CD4-positive, alpha-beta memory T cell (primary cell): ENCODE measurements at regions of chr1 and their contacts with region 1.

Region 1: GRCh38 chr1:51878616-51879336 is at the start of gene NRDC:
- DNase-seq: peak; percentile 99 to 100 (median 100)
- H3K4me3 ChIP-seq: peak within 1 kb of the TSS; percentile 92 to 96
- H3K4me3 Mint-ChIP-seq: no peak within 1 kb of the TSS
- H3K27ac ChIP-seq: peak within 1 kb of the TSS; percentile 94
- H3K27ac Mint-ChIP-seq: no peak within 1 kb of the TSS
- H3K4me1 ChIP-seq: peaks cover 42% of the 10 kb centered on the region
- H3K4me1 Mint-ChIP-seq: peaks cover 0 to 25% (median 10%) of the 10 kb centered on the region in 4 donors
- H3K27me3 ChIP-seq: no peaks in the 10 kb centered on the region
- H3K27me3 Mint-ChIP-seq: peaks cover 11 to 12% of the 10 kb centered on the region in 2 donors
- total RNA-seq, gene NRDC: 133 to 137 TPM

Region 2: GRCh38 chr1:51519048-51519864 is 359.5 kb before region 1 on chr1 and contains the start of gene EPS15:
- CTCF ChIA-PET with region 1: no interaction called
- POLR2A ChIA-PET with region 1: no interaction called
- intact Hi-C with region 1: loop called (anchors 5 kb)
- DNase-seq: peak; percentile 79 to 89 (median 83)
- H3K4me3 ChIP-seq: peak within 1 kb of the TSS; percentile 92 to 93
- H3K4me3 Mint-ChIP-seq: peak within 1 kb of the TSS; percentile 90 to 98 (median 97)
- H3K27ac ChIP-seq: peak within 1 kb of the TSS; percentile 69
- H3K27ac Mint-ChIP-seq: peak within 1 kb of the TSS; percentile 90 to 97 (median 95)
- H3K4me1 ChIP-seq: peaks cover 54% of the 10 kb centered on the region
- H3K4me1 Mint-ChIP-seq: peaks cover 44 to 62% (median 51%) of the 10 kb centered on the region in 4 donors
- H3K27me3 ChIP-seq: no peaks in the 10 kb centered on the region
- H3K27me3 Mint-ChIP-seq: no peaks in the 10 kb centered on the region
- total RNA-seq, gene EPS15: 91.5 to 92.3 TPM

Region 3: GRCh38 chr1:51729156-51729823 is 149.5 kb before region 1 on chr1:
- CTCF ChIA-PET with region 1: no interaction called
- POLR2A ChIA-PET with region 1: interaction called, 3 read pairs
- intact Hi-C with region 1: loop called (anchors 2 kb)
- DNase-seq: peak; percentile 92 to 94 (median 93)
- H3K4me3 ChIP-seq: peak overlapping the region; percentile 89 to 96
- H3K4me3 Mint-ChIP-seq: peak overlapping the region; percentile 94 to 97 (median 94)
- H3K27ac ChIP-seq: peak overlapping the region; percentile 68
- H3K27ac Mint-ChIP-seq: peak overlapping the region; percentile 67 to 96 (median 94)
- H3K4me1 ChIP-seq: peaks cover 37% of the 10 kb centered on the region
- H3K4me1 Mint-ChIP-seq: peaks cover 30 to 54% (median 39%) of the 10 kb centered on the region in 4 donors
- H3K27me3 ChIP-seq: no peaks in the 10 kb centered on the region
- H3K27me3 Mint-ChIP-seq: no peaks in the 10 kb centered on the region

Region 4: DNA sequence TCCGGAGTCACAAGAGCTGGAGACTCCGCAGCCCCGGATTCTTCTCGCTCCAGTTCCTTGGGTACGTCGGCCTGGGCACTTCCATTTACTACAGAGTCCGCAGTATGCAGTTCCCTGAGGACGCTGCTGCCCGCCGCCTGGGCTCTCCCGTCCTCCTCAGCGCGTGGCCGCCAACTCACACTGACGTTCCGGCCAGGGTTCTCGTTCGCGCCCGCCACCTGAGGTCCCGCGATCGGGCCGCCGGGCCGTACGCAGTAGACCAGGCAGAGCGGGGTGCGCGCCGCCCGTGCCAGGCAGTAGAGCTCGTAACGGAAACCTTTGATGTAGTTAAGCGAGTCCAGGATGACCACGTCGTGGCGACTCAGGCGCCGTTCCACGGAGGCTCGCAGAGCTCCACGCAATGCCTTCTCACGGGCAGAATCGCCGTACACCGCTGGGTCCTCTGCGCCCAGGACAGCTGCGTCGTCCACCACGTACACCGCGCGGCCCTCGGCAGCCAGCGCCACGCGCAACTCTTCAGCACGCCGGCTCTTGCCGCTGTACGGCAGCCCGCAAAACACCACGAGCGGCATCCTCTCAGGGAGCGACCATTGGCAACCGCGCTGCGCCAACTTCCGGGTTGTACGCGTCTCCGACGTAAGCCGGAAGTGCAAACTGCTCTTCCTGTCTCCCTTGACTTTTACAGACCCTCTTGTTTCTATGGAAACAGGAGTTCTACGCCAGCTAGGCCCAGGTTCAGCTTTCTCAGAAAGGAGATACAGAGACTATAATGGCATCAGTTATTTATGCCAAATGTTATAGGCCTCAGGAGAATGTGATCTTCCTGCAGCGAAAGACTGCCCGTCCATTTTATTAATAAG is 154.6 kb after region 1 on chr1 and contains the start of gene KTI12:
- CTCF ChIA-PET with region 1: no interaction called
- POLR2A ChIA-PET with region 1: interaction called, 13 read pairs
- intact Hi-C with region 1: loop called (anchors 1 kb)
- DNase-seq: peak; percentile 88 to 92 (median 90)
- H3K4me3 ChIP-seq: peak within 1 kb of the TSS; percentile 80 to 88
- H3K4me3 Mint-ChIP-seq: peak within 1 kb of the TSS; percentile 86 to 96 (median 93)
- H3K27ac ChIP-seq: peak within 1 kb of the TSS; percentile 81
- H3K27ac Mint-ChIP-seq: peak within 1 kb of the TSS; percentile 95 to 99 (median 96)
- H3K4me1 ChIP-seq: peaks cover 33% of the 10 kb centered on the region
- H3K4me1 Mint-ChIP-seq: peaks cover 31 to 45% (median 34%) of the 10 kb centered on the region in 4 donors
- H3K27me3 ChIP-seq: no peaks in the 10 kb centered on the region
- H3K27me3 Mint-ChIP-seq: no peaks in the 10 kb centered on the region
- total RNA-seq, gene KTI12: 14.0 to 15.6 TPM

Region 5: GRCh38 chr1:52404116-52404986 is 525.6 kb after region 1 on chr1 and contains the starts of genes ORC1 and PRPF38A:
- CTCF ChIA-PET with region 1: no interaction called
- POLR2A ChIA-PET with region 1: interaction called, 3 read pairs
- intact Hi-C with region 1: loop called (anchors 5 kb)
- DNase-seq: peak; percentile 94 to 98 (median 96)
- H3K4me3 ChIP-seq: peak within 1 kb of the TSS; percentile 85 to 88
- H3K4me3 Mint-ChIP-seq: peak within 1 kb of the TSS; percentile 98 to 100 (median 100)
- H3K27ac ChIP-seq: peak within 1 kb of the TSS; percentile 91
- H3K27ac Mint-ChIP-seq: peak within 1 kb of the TSS; percentile 94 to 99 (median 99)
- H3K4me1 ChIP-seq: peaks cover 25% of the 10 kb centered on the region
- H3K4me1 Mint-ChIP-seq: peaks cover 22 to 44% (median 36%) of the 10 kb centered on the region in 4 donors
- H3K27me3 ChIP-seq: no peaks in the 10 kb centered on the region
- H3K27me3 Mint-ChIP-seq: no peaks in the 10 kb centered on the region
- total RNA-seq, gene ORC1: 1.1 to 1.5 TPM
- total RNA-seq, gene PRPF38A: 69.7 to 70.4 TPM

Region 6: DNA sequence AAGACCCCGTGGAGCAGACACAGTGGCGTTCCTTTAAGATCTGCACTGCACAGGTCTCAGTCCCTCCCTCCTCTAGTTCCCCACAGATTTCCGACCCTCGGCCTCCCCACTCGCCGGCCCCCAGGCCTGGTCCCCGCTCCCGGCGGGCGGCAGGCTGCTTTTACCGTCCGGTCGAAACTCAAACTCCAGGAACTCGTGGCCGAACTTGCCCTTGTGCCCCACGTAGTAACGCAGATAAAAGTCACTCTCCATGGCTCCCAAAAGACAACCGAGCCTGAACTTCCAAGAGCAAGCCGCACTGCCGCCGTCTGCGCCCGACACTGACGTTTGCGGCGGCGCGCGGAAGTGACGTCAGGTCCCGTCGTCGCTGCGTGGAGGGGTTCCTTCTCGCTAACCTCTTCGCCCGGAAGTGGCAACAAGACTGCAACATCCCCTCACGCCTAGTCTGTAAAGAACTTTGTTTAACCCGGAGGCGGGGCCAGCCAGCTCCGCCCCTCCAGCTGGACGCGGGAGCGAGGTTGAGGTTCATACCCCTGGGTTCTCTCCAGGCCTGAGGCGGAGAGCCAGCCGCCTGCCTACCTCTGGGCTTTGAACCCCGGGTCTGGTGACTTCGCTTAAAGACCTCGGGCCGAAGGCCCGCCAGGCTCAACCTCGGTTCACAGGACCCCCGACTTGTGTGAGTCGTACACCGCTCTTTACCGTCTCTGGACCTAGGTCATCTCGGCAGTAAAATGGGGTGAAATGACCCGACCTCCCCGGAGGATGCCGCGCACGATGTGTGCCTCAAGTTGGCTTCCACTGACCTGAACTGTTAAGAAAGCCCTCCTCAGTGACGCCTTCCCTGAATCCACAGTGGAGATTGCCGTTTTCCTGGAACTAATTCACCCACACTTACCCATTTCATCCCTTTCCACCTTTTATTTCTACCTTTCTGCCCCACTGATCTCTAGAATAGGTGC is 1359.7 kb after region 1 on chr1 and contains the start of gene MAGOH:
- CTCF ChIA-PET with region 1: no interaction called
- POLR2A ChIA-PET with region 1: no interaction called
- intact Hi-C with region 1: loop called (anchors 5 kb)
- DNase-seq: peak; percentile 93 to 95 (median 94)
- H3K4me3 ChIP-seq: peak within 1 kb of the TSS; percentile 87 to 96
- H3K4me3 Mint-ChIP-seq: peak within 1 kb of the TSS; percentile 96 to 99 (median 97)
- H3K27ac ChIP-seq: peak within 1 kb of the TSS; percentile 87
- H3K27ac Mint-ChIP-seq: peak within 1 kb of the TSS; percentile 97 to 99 (median 98)
- H3K4me1 ChIP-seq: peaks cover 31% of the 10 kb centered on the region
- H3K4me1 Mint-ChIP-seq: peaks cover 21 to 36% (median 29%) of the 10 kb centered on the region in 4 donors
- H3K27me3 ChIP-seq: no peaks in the 10 kb centered on the region
- H3K27me3 Mint-ChIP-seq: no peaks in the 10 kb centered on the region
- total RNA-seq, gene MAGOH: 46.7 to 49.9 TPM